ENCODE measurements at regions of chr22 and their contacts with region 1.

Region 1: GRCh38 chr22:39532215-39533071 is at the start of gene RPS19BP1:
- DNase-seq: peak; percentile 99 to 100 (median 100)
- ATAC-seq: peak; percentile 84
- H3K4me3 ChIP-seq: peak within 1 kb of the TSS; percentile 86
- H3K4me1 ChIP-seq: peaks cover 52% of the 10 kb centered on the region
- CTCF ChIP-seq: peak; percentile 15
- total RNA-seq, gene RPS19BP1: 59.1 to 77.7 (median 61.2) TPM

Region 2: GRCh38 chr22:40024201-40025061 is 492.0 kb after region 1 on chr22:
- intact Hi-C with region 1: loop called in 1 of 2 experiments (anchors 5 kb)
- DNase-seq: peak; percentile 82 to 88 (median 86)
- ATAC-seq: peak; percentile 93
- H3K4me3 ChIP-seq: no peak overlapping the region
- H3K4me1 ChIP-seq: peaks cover 6% of the 10 kb centered on the region
- CTCF ChIP-seq: peak; percentile 69

Region 3: GRCh38 chr22:40031766-40032470 is 499.5 kb after region 1 on chr22:
- intact Hi-C with region 1: loop called in 1 of 2 experiments (anchors 5 kb)
- DNase-seq: no peak
- ATAC-seq: no peak
- H3K4me3 ChIP-seq: no peak overlapping the region
- H3K4me1 ChIP-seq: no peaks in the 10 kb centered on the region
- CTCF ChIP-seq: no peak

Region 4: GRCh38 chr22:40346178-40347118 is 814.0 kb after region 1 on chr22 and contains the start of gene ADSL:
- intact Hi-C with region 1: loop called in 1 of 2 experiments (anchors 10 kb)
- DNase-seq: peak; percentile 93
- ATAC-seq: peak; percentile 94
- H3K4me3 ChIP-seq: peak within 1 kb of the TSS; percentile 56
- H3K4me1 ChIP-seq: peaks cover 22% of the 10 kb centered on the region
- CTCF ChIP-seq: no peak
- total RNA-seq, gene ADSL: 34.0 to 48.1 (median 42.8) TPM